ENCODE measurements at regions of chr19 and their contacts with region 1.

Region 1: GRCh38 chr19:40348125-40348913 is at the starts of genes C19orf47 and PLD3:
- DNase-seq: peak; percentile 99
- H3K4me3 Mint-ChIP-seq: peak within 1 kb of the TSS; percentile 97
- H3K27ac Mint-ChIP-seq: peak within 1 kb of the TSS; percentile 95
- H3K4me1 Mint-ChIP-seq: peaks cover 21% of the 10 kb centered on the region
- H3K27me3 Mint-ChIP-seq: peaks cover 2% of the 10 kb centered on the region
- total RNA-seq, gene C19orf47: 26.4 and 28.1 TPM in 2 replicates
- total RNA-seq, gene PLD3: 45.0 and 45.3 TPM in 2 replicates

Region 2: DNA sequence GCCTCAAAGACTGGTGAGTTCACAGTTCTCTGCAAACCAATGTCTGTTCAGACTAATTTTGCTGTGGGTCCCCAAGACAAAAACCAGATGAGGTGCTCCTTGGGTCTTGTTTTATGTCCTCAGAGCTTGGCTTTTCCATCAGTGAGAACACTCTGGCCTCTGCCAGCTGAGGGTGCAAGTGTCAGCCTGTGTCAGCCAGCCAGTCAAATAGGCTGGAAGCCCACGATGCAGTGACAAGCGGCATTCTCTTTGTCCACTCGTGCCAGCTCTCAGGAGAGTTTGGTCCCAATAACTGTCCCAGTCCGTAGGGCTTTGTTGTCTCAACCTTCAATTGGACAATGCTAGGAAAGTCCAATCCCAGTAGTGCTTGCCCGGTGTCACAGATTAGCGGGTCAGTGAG is 53.8 kb before region 1 on chr19:
- intact Hi-C with region 1: no loop called
- DNase-seq: no peak
- H3K4me3 Mint-ChIP-seq: no peak overlapping the region
- H3K27ac Mint-ChIP-seq: no peak overlapping the region
- H3K4me1 Mint-ChIP-seq: no peaks in the 10 kb centered on the region
- H3K27me3 Mint-ChIP-seq: peaks cover 2% of the 10 kb centered on the region

Region 3: DNA sequence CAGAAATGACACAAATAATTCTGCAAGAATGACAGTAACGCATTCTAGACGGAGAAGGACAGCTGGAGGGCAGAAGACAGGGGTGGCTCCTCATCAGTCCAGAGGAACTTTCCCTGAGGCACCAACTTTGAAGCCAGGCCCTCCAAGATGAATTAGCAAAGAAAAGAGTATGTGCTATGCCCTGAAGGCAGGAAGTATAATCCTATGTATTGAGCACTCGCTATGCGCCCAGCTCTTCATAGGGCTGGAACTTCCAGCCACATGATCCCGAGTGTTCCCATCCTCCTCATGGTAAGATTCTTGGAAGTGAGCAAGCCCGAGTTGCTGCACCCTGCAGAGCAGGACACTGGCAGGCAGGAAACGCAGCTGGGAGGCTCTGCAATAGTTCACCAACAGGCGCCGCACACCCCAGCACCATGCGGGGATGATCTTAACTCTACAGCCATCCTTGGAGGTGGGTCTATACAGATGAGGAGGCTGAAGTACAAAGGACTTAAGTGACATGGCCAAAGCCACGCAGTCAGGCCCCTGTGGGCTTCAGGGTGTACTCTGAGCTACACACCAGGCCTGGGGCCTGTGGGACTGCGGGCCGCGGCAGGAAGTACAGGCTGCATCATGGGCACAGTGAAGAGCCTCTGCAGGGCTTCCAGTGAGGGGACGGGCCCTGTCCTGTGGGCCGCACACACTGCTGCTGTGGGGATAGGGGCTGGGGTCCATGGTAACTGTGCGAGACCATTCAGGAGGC is 25.3 kb before region 1 on chr19:
- intact Hi-C with region 1: no loop called
- DNase-seq: no peak
- H3K4me3 Mint-ChIP-seq: no peak overlapping the region
- H3K27ac Mint-ChIP-seq: no peak overlapping the region
- H3K4me1 Mint-ChIP-seq: no peaks in the 10 kb centered on the region
- H3K27me3 Mint-ChIP-seq: no peaks in the 10 kb centered on the region

Region 4: DNA sequence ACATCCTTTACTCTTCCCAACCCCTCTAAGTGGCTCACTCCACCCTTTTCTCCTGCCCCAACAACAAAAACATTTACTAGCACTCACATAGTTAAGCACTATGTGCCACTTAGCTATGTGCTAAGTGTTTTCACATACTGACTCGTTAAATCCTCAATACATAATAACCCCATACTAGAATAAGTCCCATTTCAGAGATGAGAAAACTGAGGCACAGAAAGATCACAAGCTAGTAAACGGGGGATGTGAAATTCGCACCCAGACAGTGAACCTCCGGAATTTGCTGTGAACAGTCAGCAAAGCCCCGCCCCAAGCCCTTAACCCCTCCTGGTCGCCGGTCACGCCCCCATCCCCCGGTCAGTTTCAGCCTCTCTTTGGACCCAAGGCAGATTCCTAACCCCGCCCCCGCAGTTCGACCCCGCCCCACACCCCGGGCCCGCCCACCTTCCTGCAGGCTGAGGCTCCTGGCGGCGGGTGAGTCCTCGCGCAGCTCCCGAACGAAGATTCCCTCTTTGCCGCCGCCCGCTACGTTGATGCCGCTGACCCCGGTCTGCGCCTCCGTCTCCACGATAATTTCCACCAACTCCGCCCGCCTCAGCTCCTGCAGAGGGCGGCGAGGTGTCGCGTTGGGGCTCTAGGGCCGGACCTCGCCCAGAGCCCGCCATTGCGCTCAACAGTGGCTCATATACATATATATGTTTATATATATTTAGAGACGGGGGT is 55.1 kb after region 1 on chr19:
- intact Hi-C with region 1: loop called (anchors 1 kb)
- DNase-seq: peak; percentile 80
- H3K4me3 Mint-ChIP-seq: peak overlapping the region; percentile 83
- H3K27ac Mint-ChIP-seq: peak overlapping the region; percentile 72
- H3K4me1 Mint-ChIP-seq: peaks cover 21% of the 10 kb centered on the region
- H3K27me3 Mint-ChIP-seq: peaks cover 7% of the 10 kb centered on the region

Region 5: DNA sequence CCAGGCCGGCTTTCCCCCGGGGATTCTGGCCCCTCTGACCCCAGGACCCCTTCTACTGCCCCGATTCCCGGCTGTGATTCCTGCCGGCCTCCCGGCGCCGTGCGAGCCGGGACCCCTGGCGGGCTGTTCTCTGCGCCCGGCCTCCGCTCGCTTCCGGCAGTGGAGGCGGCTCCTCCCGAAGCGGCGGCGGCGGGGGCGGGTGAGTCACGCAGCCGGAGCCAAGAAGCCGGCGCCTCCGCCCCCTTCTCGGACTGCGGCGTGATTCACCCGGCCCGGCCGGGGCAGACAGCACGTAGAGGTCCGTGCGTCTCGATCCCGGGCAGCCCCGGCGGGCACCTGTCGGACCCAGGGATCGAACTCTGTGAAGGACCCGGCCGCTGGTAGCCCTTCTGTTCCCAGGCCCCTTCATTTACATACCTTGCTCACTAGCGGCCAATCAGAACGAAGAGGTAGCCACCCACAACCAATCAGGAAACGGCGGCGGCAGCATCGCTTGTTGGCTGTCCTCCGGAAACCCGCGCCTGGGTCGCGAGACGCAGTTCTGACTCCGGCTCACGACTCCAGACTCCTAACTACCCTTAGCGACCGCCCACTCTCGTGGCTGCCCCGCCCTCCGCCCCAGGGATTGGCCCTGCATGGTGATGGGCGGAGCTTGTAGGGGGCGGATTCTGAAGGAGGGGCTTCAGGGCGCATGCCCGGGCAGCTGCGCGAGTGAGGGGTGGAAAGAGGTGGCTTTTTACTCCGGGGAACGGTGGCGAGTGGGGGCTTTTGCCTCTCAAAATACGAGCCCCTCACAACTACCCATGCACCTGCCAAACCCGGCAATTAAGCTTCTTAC is 77.3 kb after region 1 on chr19 and contains the start of gene SERTAD1:
- intact Hi-C with region 1: loop called (anchors 1 kb)
- DNase-seq: peak; percentile 100
- H3K4me3 Mint-ChIP-seq: peak within 1 kb of the TSS; percentile 93
- H3K27ac Mint-ChIP-seq: peak within 1 kb of the TSS; percentile 99
- H3K4me1 Mint-ChIP-seq: peaks cover 7% of the 10 kb centered on the region
- H3K27me3 Mint-ChIP-seq: peaks cover 2% of the 10 kb centered on the region
- total RNA-seq, gene SERTAD1: 18.3 and 19.4 TPM in 2 replicates

Region 6: DNA sequence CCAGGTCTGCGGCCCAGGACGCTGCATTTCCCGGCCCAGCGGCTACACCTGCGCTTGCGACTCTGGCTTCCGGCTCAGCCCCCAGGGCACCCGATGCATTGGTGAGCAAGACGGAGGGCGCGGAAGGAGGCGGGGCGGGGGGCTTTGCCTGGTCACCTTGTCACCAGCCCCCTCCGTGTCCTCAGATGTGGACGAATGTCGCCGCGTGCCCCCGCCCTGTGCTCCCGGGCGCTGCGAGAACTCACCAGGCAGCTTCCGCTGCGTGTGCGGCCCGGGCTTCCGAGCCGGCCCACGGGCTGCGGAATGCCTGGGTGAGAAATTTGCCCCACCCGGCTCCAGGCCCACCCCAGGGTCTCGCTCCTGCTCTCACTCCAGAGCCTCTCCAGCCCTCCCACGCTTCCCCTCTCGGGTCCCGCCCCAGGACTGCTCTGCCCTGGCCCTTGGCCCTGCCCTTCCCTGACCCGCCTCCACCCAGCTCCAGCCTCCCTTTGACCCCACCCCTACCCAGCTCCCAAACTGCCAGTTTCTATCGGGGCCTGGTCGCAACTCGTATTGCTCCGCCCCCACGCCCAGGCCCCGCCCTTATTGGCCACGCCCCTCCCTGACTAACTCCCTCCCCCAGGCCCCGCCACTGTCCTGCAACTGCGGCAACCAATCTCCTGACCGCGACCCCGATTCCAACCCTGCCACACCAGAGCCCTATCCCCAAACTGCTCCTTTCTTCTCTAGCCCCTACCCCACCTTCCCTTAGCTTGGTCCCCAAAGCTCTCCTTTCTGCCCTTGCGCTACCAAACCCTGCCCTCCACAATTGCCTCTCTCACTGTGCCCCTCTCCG is 261.5 kb after region 1 on chr19:
- intact Hi-C with region 1: loop called (anchors 2 kb)
- DNase-seq: peak; percentile 86
- H3K4me3 Mint-ChIP-seq: peak overlapping the region; percentile 81
- H3K27ac Mint-ChIP-seq: peak overlapping the region; percentile 86
- H3K4me1 Mint-ChIP-seq: peaks cover 44% of the 10 kb centered on the region
- H3K27me3 Mint-ChIP-seq: no peaks in the 10 kb centered on the region

Region 7: GRCh38 chr19:40716655-40717324 is 368.5 kb after region 1 on chr19 and contains the starts of genes COQ8B and ITPKC:
- intact Hi-C with region 1: loop called (anchors 5 kb)
- DNase-seq: peak; percentile 100
- H3K4me3 Mint-ChIP-seq: peak within 1 kb of the TSS; percentile 97
- H3K27ac Mint-ChIP-seq: peak within 1 kb of the TSS; percentile 95
- H3K4me1 Mint-ChIP-seq: peaks cover 44% of the 10 kb centered on the region
- H3K27me3 Mint-ChIP-seq: no peaks in the 10 kb centered on the region
- total RNA-seq, gene COQ8B: 38.4 and 41.6 TPM in 2 replicates
- total RNA-seq, gene ITPKC: 8.7 and 9.9 TPM in 2 replicates